T-cell (primary cell): ENCODE measurements at regions of chr9 and their contacts with region 1.

Region 1: DNA sequence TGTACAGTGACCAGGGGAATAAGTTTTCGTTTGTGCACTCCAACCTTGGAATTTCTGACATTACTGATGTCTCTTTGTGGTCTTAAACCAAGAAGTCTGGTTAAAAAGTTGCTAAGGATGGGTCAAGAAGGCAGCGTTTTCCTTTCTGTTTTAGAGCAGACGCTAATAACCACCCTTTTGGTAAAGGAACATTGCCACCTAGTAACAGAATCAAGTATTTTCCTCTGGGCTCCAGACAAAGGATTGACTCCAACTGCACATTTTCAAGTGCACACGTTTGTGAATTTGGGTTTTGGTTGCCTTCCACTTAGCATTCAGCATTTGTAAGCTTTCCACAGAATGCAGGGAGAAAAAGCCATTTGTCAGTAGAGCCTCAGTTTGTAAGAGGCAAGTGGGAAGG is 22.2 kb upstream of the CEP78 start:
- DNase-seq: peak in 2 of 35 experiments; percentile 8 to 64
- ATAC-seq: peak; percentile 51 to 72 (median 56)
- H3K4me3 ChIP-seq: no peak overlapping the region
- H3K4me3 Mint-ChIP-seq: no peak overlapping the region
- H3K27ac ChIP-seq: no peak overlapping the region
- H3K27ac Mint-ChIP-seq: no peak overlapping the region
- H3K4me1 ChIP-seq: peaks cover 29 to 36% of the 10 kb centered on the region in 2 experiments
- H3K4me1 Mint-ChIP-seq: peaks cover 45 to 48% (median 47%) of the 10 kb centered on the region in 3 donors
- H3K27me3 ChIP-seq: no peaks in the 10 kb centered on the region
- H3K27me3 Mint-ChIP-seq: no peaks in the 10 kb centered on the region

Region 2: DNA sequence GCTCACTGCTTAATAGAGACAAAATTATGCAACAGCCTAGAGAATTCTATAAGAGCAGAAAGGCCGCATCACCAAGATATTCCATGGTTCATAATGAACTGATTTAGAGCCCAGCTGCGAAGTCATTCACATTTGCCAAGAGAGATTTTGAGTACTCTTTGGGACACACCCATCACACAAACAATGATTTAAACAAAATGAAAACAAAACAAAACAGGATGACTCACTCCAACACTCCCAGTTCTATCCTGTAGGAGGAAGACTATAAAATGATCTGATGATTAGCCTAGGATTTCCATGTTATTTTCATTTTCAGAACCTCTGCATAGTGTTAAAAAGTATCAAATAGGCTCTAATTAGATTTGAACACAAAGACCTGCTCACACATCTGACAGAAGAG is 419.8 kb before region 1 on chr9:
- CTCF ChIA-PET with region 1: no interaction called
- POLR2A ChIA-PET with region 1: no interaction called
- DNase-seq: no peak
- ATAC-seq: no peak
- H3K4me3 ChIP-seq: no peak overlapping the region
- H3K4me3 Mint-ChIP-seq: no peak overlapping the region
- H3K27ac ChIP-seq: no peak overlapping the region
- H3K27ac Mint-ChIP-seq: no peak overlapping the region
- H3K4me1 ChIP-seq: no peaks in the 10 kb centered on the region
- H3K4me1 Mint-ChIP-seq: peaks cover 0 to 10% (median 0%) of the 10 kb centered on the region in 3 donors
- H3K27me3 ChIP-seq: no peaks in the 10 kb centered on the region
- H3K27me3 Mint-ChIP-seq: no peaks in the 10 kb centered on the region

Region 3: DNA sequence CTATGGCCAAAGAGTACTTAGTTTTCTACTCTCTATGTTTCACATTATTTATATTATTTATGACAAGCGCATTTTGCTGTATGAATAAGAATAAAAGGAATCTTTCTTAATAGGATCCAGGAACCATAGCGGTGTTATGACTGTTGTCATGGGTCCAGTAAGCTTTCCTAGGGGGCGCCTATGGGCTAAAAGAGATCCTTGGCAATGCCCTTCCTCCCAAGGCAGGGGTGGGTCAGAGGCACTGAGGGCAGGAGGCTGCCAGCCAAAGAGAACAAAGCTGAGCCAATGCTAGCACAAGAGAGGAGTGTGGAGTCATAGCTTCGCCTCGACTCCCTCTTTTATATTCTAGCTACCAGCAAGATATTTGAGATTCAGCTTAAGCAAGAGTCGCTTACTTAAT is 83.7 kb before region 1 on chr9:
- CTCF ChIA-PET with region 1: no interaction called
- POLR2A ChIA-PET with region 1: interaction called in 1 of 2 experiments, 10 read pairs
- DNase-seq: no peak
- ATAC-seq: no peak
- H3K4me3 ChIP-seq: no peak overlapping the region
- H3K4me3 Mint-ChIP-seq: no peak overlapping the region
- H3K27ac ChIP-seq: no peak overlapping the region
- H3K27ac Mint-ChIP-seq: no peak overlapping the region
- H3K4me1 ChIP-seq: peaks cover 0 to 9% of the 10 kb centered on the region in 2 experiments
- H3K4me1 Mint-ChIP-seq: peaks cover 16 to 20% (median 18%) of the 10 kb centered on the region in 3 donors
- H3K27me3 ChIP-seq: no peaks in the 10 kb centered on the region
- H3K27me3 Mint-ChIP-seq: peaks cover 0 to 13% of the 10 kb centered on the region in 2 donors